Cardiac septum (tissue), 1 donor: ENCODE measurements at regions of chr12 and their contacts with region 1.

Region 1: GRCh38 chr12:119115296-119115905 is 63.3 kb upstream of the HSPB8 start:
- DNase-seq: no peak

Region 2: GRCh38 chr12:119156401-119157044 is 41.1 kb after region 1 on chr12:
- intact Hi-C with region 1: loop called (anchors 5 kb)
- DNase-seq: no peak

Region 3: GRCh38 chr12:119274636-119275065 is 159.2 kb after region 1 on chr12:
- intact Hi-C with region 1: loop called (anchors 2 kb)
- DNase-seq: no peak